Activated CD4-positive, alpha-beta memory T cell treated with anti-CD3 and anti-CD28 coated beads, Interleukin-2, amount 10 ng/mL, durations not matched to agents 7 days and 5 days (primary cell): ENCODE measurements at regions of chr7 and their contacts with region 1.

Region 1: DNA sequence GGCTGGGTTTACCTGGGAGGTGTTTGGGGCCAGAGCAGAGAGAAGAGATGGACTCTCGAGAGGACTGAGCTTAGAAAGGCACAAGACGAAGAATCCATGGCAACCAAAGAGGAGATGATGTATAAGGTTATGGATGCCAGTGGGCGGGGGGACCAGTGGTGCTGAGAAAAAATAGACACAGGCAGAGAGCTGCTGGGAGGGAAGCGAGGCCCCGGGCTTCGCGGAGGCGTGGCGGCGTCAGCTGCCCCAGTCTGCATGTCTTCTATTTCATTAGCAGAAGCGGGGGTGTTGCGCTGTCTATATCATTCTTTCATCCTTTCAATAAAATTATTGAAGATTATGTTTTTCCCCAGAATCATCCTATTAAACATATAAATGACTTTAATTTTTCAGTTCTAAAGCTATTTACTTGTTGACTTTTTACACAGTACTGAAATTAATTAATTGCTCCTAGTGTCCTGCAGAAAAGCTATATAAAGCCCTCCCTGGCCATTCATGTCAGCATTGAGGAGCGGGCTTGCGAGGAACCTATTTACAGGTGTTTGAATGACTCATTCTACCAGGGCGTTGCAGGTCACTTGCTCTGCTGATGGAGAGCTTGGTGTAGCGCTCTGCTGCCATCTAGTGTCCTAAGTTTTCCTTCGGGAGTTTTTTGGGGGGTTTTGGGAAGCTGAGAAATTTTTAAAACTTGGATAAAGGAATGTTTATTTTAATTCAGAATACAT is 42.9 kb upstream of the BHLHA15 start:
- DNase-seq: peak; percentile 65
- H3K4me3 Mint-ChIP-seq: no peak overlapping the region
- H3K27ac Mint-ChIP-seq: no peak overlapping the region
- H3K4me1 Mint-ChIP-seq: peaks cover 10% of the 10 kb centered on the region
- H3K27me3 Mint-ChIP-seq: no peaks in the 10 kb centered on the region

Region 2: DNA sequence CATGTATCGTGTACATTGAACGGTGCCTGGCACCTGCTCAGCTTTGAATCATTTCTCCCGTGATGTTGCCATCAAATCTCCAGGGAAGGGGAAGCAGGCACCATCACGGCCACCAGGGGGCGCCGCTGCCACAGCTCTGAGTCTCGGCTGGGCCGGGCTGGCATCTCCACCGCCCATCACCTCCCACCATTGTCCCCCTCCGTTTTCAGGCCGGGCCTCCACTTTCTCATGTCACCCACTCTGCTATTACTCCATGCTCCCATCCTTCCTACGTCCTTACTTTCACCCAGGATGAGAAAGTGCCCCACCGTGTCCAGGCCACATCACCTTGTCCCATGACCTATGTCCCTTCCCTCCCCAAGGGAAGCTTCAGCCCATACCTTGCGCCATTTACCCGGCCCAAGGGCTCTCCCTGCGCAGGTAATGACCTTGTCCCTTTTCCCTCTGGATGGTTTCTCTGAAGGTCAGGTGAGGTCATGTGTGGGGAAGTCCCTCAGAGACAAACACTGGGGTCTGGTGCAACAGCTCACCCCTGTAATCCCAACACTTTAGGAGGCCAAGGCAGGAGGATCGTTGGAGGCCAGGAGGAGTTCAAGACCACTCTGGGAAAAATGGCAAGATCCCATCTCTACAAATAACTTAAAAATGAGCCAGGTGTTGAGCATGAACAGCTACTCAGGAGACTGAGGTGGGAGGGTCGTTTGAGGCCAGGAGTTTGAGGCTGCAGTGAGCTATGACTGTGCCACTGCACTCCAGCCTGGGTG is 146.6 kb before region 1 on chr7:
- CTCF ChIA-PET with region 1: interaction called, 215 read pairs
- POLR2A ChIA-PET with region 1: interaction called, 9 read pairs
- DNase-seq: peak; percentile 79
- H3K4me3 Mint-ChIP-seq: no peak overlapping the region
- H3K27ac Mint-ChIP-seq: no peak overlapping the region
- H3K4me1 Mint-ChIP-seq: peaks cover 5% of the 10 kb centered on the region
- H3K27me3 Mint-ChIP-seq: peaks cover 4% of the 10 kb centered on the region

Region 3: GRCh38 chr7:98106647-98107445 is 61.5 kb before region 1 on chr7 and contains the start of gene LMTK2:
- CTCF ChIA-PET with region 1: interaction called, 67 read pairs
- POLR2A ChIA-PET with region 1: interaction called, 14 read pairs
- DNase-seq: peak; percentile 96
- H3K4me3 Mint-ChIP-seq: peak within 1 kb of the TSS; percentile 98
- H3K27ac Mint-ChIP-seq: peak within 1 kb of the TSS; percentile 82
- H3K4me1 Mint-ChIP-seq: peaks cover 21% of the 10 kb centered on the region
- H3K27me3 Mint-ChIP-seq: peaks cover 1% of the 10 kb centered on the region
- total RNA-seq, gene LMTK2: 10.0 to 11.6 TPM

Region 4: GRCh38 chr7:98149116-98149692 is 19.1 kb before region 1 on chr7:
- CTCF ChIA-PET with region 1: interaction called, 10 read pairs
- POLR2A ChIA-PET with region 1: no interaction called
- DNase-seq: no peak
- H3K4me3 Mint-ChIP-seq: no peak overlapping the region
- H3K27ac Mint-ChIP-seq: no peak overlapping the region
- H3K4me1 Mint-ChIP-seq: no peaks in the 10 kb centered on the region
- H3K27me3 Mint-ChIP-seq: no peaks in the 10 kb centered on the region

Region 5: DNA sequence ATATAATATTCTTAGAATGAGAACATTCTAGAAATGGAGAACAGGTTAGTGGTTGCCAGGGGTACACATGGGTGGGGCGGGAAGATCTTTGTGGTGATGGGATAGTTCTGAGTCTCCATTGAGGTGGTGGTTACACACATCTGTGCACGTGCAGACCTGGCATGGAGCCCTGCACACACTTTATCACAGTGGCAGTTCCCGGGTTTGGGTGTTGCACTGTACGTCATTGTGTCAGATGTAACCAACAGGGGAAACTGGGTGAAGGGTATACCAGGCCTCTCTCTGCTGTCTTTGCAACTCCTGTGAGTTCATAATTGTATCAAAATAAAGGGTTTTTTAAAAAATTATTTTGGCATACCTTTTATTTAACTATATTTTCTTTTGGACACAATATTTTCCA is 10.6 kb before region 1 on chr7:
- CTCF ChIA-PET with region 1: interaction called, 11 read pairs
- POLR2A ChIA-PET with region 1: no interaction called
- DNase-seq: no peak
- H3K4me3 Mint-ChIP-seq: no peak overlapping the region
- H3K27ac Mint-ChIP-seq: no peak overlapping the region
- H3K4me1 Mint-ChIP-seq: no peaks in the 10 kb centered on the region
- H3K27me3 Mint-ChIP-seq: no peaks in the 10 kb centered on the region

Region 6: GRCh38 chr7:98178347-98178746 is 10.0 kb after region 1 on chr7:
- CTCF ChIA-PET with region 1: interaction called, 22 read pairs
- POLR2A ChIA-PET with region 1: no interaction called
- DNase-seq: no peak
- H3K4me3 Mint-ChIP-seq: no peak overlapping the region
- H3K27ac Mint-ChIP-seq: no peak overlapping the region
- H3K4me1 Mint-ChIP-seq: no peaks in the 10 kb centered on the region
- H3K27me3 Mint-ChIP-seq: no peaks in the 10 kb centered on the region

Region 7: DNA sequence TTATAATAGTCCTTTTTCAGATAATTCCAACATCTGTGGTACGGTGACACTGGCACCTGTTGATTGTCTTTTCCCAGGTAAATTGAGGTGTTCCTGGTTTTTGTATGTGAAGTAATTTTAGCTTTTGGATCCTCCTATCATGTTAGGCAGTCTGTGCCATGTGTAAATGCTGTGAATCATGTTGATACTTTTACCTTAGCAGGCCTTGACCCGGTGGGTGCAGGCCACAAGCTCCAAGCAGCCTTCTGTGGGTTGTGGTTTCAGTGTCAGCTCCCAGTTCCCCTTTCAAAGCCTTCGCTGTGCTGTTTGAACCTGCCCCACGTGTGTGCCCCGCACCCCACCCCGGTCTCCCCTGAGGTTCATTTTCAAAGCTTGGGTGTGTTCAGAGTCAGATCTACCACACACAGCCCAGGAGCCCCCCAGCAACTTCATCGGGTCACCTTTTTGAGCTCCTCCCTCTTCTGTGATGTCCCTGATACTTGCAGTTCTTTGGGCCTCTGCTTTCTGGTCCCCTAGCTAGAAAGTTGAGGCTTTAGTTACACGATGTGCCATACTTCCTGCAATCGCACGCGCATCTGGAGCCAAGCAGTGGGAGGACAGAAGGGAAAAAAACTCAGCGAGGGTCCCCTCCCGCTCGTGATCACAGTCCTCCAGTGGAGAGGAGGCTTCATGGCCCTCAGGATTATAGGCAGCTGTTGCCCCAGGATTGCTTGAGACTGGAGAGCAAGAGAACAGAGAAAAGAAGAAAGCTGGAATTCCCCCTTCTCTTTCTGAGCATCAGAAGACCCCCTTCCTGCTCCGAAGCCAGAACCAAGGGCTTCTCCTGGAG is 34.2 kb after region 1 on chr7:
- CTCF ChIA-PET with region 1: interaction called, 12 read pairs
- POLR2A ChIA-PET with region 1: no interaction called
- DNase-seq: peak; percentile 77
- H3K4me3 Mint-ChIP-seq: peak overlapping the region; percentile 9
- H3K27ac Mint-ChIP-seq: peak overlapping the region; percentile 70
- H3K4me1 Mint-ChIP-seq: peaks cover 40% of the 10 kb centered on the region
- H3K27me3 Mint-ChIP-seq: no peaks in the 10 kb centered on the region

Region 8: DNA sequence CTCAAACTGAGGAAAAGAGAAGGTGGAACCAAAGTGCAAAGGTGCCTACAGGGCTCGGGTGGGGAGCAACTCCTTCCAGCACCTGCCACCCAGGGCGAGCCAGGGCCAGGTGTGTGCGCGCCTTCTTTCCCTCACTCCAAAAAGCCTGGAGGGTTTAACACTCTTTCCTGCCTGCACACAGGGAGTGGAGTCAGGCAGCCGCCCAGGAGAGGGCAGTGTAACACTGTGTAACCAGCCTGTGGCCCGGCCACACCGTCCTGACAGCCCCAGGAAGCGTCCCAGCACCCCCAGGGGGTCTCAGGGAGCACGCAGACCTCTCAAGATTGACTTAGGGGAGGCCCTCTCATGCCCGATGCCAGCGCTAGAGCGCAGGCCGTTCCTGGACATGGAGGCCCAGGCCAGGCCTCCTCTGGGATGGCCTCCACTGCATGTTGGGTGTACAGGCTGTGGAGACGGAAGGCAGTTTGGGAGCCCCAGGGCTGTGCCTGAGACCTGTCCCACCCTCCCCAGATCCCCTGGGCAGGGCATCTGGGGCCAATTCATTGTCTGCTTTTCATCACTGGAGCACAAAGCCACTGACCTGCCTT is 126.5 kb after region 1 on chr7:
- CTCF ChIA-PET with region 1: no interaction called
- POLR2A ChIA-PET with region 1: no interaction called
- DNase-seq: peak; percentile 34
- H3K4me3 Mint-ChIP-seq: no peak overlapping the region
- H3K27ac Mint-ChIP-seq: no peak overlapping the region
- H3K4me1 Mint-ChIP-seq: no peaks in the 10 kb centered on the region
- H3K27me3 Mint-ChIP-seq: no peaks in the 10 kb centered on the region